Lower leg skin (tissue), 4 donors: ENCODE measurements at regions of chr15 and their contacts with region 1.

Region 1: GRCh38 chr15:70853821-70854666 is at the start of gene LARP6:
- DNase-seq: peak in 1 of 2 donors; percentile 91
- H3K4me3 ChIP-seq: peak within 1 kb of the TSS; percentile 60
- CTCF ChIP-seq: no peak
- POLR2A ChIP-seq: no peak
- total RNA-seq, gene LARP6: 4.9 to 22.3 (median 14.5) TPM

Region 2: DNA sequence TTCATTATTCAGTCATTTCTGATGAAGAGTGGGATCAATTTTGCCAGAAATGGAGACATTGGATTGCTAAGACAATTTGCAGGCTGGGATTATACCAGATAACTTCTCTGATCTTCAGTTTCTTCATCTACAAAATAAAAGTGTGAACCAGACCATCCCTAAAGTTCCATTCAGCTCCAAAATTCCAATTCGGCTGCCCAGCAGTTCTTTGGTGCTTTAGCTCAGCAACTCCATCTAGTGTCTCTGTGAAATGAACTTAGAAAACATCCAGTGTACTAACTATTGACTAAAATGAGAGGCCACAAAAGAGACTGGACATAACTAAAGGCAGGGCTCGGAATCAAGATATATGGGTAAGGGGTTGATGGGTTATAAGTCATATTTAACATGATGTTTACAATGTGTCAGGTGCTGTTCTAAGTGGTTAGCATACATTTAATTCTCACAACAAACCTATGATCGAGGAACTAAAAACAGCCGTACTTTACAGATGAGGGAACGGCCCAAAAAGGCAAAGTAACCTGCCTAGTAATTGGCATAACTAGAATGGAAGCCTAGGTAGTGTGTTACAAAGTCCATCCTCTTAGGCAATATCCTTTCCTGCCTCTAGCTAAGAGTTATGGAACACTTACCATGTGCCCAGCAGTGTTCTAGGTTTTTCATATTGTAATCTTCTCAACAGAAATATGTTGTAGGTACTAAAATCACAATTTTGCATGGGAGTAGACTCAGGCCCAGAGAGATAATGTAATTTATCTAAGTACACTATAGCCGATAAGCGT is 21.1 kb after region 1 on chr15:
- intact Hi-C with region 1: loop called (anchors 1 kb)
- DNase-seq: no peak
- H3K4me3 ChIP-seq: no peak overlapping the region
- CTCF ChIP-seq: no peak
- POLR2A ChIP-seq: no peak

Region 3: GRCh38 chr15:72604794-72605193 is 1750.8 kb after region 1 on chr15:
- intact Hi-C with region 1: loop called (anchors 5 kb)
- DNase-seq: no peak
- H3K4me3 ChIP-seq: no peak overlapping the region
- CTCF ChIP-seq: no peak
- POLR2A ChIP-seq: no peak